Dendritic cell treated with granulocyte-macrophage colony-stimulating factor and Interleukin-4, amounts not matched to agents 40 ng/mL and 50 ng/mL, for 4 days (primary cell): ENCODE measurements at regions of chr12 and their contacts with region 1.

Region 1: GRCh38 chr12:62581288-62582064 is 114.8 kb downstream of the MON2 start:
- H3K4me3 Mint-ChIP-seq: no peak overlapping the region
- H3K27ac Mint-ChIP-seq: no peak overlapping the region
- H3K4me1 Mint-ChIP-seq: peaks cover 10% of the 10 kb centered on the region
- H3K27me3 Mint-ChIP-seq: no peaks in the 10 kb centered on the region

Region 2: DNA sequence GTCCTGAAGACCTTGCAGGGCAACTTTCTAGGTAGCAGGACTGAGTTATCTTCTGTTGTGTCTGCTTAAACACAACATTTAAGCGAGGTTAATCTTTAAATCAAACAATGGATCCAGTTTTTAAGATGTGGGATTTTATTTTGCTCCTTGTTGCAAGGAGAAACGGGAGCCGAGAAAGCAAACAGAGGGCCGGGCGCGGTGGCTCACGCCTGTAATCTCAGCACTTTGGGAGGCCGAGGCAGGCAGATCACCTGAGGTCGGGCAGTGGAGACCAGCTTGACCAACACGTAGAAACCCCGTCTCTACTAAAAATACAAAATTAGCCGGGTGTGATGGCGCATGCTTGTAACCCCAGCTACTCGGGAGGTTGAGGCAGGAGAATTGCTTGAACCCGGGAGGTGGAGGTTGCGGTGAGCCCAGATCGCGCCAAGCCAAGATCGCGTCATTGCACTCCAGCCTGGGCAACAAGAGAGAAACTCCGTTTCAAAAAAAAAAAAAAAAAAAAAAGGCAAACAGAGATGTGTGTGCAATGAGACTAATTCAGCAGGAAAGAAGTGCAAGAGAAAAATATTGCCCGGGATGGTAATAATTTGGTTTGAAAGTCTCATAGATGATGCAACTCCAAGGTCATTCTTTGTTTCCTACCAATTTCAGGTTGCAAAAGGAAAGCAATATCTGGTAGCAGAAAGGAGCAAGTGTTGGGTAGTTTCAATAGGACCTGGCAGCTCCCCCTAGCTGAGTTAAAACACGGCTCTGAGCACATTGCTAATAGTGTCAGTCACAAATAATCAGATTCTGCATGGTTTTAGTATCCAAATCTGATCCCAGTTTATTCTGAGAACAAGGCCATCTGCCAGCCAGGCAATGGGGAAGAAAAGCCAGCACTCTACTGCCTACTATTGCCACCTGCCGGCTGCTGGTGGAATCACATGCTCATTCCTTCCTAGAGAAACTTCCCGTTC is 212.1 kb after region 1 on chr12:
- intact Hi-C with region 1: loop called (anchors 1 kb)
- H3K4me3 Mint-ChIP-seq: no peak overlapping the region
- H3K27ac Mint-ChIP-seq: no peak overlapping the region
- H3K4me1 Mint-ChIP-seq: peaks cover 20% of the 10 kb centered on the region
- H3K27me3 Mint-ChIP-seq: no peaks in the 10 kb centered on the region

Region 3: DNA sequence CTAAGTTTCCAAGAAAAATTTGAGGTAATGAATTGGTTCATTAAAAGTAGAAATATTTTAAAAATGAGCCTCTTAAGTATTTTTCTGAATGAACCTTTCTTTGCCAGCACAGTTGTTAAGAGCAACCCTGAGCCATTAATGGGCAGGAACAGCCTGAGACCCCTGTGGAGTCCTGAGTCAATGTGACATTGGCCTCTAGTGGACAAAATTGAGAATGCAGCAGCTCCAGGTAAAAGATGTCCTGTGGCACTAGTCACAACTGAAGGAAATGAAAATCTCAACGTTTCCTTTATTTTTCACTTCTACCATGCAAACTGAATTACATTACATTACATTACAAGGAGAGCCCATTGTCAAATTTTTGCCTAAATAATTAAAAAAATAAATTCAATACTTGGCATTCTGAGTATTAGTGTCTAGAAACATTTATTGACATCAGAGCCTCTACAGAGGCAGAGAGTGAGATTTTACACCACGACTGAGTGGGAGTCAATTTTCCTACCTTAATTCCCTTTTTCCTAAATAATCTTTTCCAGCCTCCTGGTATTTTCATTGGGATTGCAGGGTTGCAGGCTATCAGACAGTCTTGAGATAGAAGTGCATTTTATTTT is 217.8 kb after region 1 on chr12:
- intact Hi-C with region 1: loop called (anchors 1 kb)
- H3K4me3 Mint-ChIP-seq: no peak overlapping the region
- H3K27ac Mint-ChIP-seq: no peak overlapping the region
- H3K4me1 Mint-ChIP-seq: no peaks in the 10 kb centered on the region
- H3K27me3 Mint-ChIP-seq: no peaks in the 10 kb centered on the region